ENCODE measurements at regions of chr14 and their contacts with region 1.

Region 1: DNA sequence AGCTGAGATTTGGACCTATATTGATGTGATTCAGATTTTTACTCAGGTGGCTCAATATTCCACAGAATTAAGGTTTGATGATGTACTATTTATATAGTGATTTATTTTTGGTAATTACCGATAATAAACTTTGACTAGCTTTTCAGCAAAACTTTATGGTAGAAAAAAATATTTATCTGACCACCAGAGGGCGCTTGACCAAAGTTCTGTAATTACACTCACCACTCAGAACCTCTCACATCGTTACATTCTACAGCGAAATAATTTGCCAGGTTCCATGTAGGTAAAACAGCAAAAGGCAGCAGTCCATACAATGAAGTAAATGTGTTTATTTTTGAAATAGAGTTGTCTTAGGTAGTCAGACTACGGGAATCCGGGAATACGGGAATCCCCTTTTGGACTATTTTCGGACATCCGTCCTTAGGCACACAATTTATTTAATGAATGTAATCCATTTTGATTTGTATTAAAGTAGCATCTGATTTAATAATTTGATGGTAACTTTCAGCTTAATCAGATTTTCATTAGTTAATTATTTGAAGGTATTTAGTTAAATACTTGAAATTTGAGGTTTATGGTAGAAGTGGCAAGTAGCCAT is 143.0 kb upstream of the DDHD1 start:
- DNase-seq: no peak
- H3K4me3 ChIP-seq: no peak overlapping the region
- H3K27ac ChIP-seq: no peak overlapping the region
- H3K4me1 ChIP-seq: no peaks in the 10 kb centered on the region
- H3K27me3 ChIP-seq: no peaks in the 10 kb centered on the region
- CTCF ChIP-seq: peak; percentile 16 to 66 (median 48)
- EP300 ChIP-seq: no peak
- POLR2A ChIP-seq: no peak

Region 2: GRCh38 chr14:53152890-53153701 is 143.0 kb before region 1 on chr14 and contains the start of gene DDHD1:
- intact Hi-C with region 1: loop called (anchors 5 kb)
- DNase-seq: peak; percentile 86
- H3K4me3 ChIP-seq: peak within 1 kb of the TSS; percentile 63 to 87 (median 76)
- H3K27ac ChIP-seq: peak within 1 kb of the TSS; percentile 84 to 97 (median 96)
- H3K4me1 ChIP-seq: peaks cover 0 to 24% (median 18%) of the 10 kb centered on the region in 4 donors
- H3K27me3 ChIP-seq: no peaks in the 10 kb centered on the region
- CTCF ChIP-seq: no peak
- EP300 ChIP-seq: no peak
- POLR2A ChIP-seq: no peak
- total RNA-seq, gene DDHD1: 15.2 to 21.4 (median 17.9) TPM

Region 3: DNA sequence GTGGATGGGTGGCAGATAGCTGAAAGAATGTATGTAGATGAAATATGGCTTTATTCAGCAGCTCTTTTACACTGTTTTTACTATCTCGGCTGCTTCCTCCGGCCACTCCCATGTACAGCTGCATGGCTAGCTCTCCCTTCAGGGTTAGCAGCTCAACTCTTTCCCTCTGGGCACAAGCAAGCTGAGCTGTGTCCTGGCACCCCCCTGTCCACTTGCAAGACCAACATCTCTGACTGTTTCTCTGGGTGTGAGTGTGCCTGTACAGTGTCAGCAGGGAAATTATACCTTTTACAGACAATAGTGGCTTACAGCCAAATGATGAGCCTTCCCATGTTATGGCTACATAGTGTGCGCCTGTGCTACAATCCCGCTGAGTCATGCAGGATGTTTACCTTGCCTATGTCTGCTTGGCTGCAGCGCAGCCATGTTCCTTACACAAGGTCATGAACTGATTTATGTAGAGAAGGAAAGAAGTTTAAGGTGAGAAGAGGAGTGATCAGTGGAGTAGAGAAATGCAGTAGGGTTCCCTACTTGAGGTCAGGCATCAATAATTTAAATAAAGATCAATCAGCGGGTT is 17.1 kb before region 1 on chr14:
- intact Hi-C with region 1: no loop called
- DNase-seq: no peak
- H3K4me3 ChIP-seq: no peak overlapping the region
- H3K27ac ChIP-seq: peak overlapping the region in 1 of 4 donors; percentile 18
- H3K4me1 ChIP-seq: peaks cover 0 to 10% (median 3%) of the 10 kb centered on the region in 4 donors
- H3K27me3 ChIP-seq: no peaks in the 10 kb centered on the region
- CTCF ChIP-seq: no peak
- EP300 ChIP-seq: no peak
- POLR2A ChIP-seq: no peak

Region 4: GRCh38 chr14:54347997-54348611 is 1052.0 kb after region 1 on chr14:
- intact Hi-C with region 1: loop called (anchors 5 kb)
- DNase-seq: no peak
- H3K4me3 ChIP-seq: no peak overlapping the region
- H3K27ac ChIP-seq: peak overlapping the region in 1 of 4 donors; percentile 56
- H3K4me1 ChIP-seq: no peaks in the 10 kb centered on the region
- H3K27me3 ChIP-seq: no peaks in the 10 kb centered on the region
- CTCF ChIP-seq: peak; percentile 12 to 61 (median 49)
- EP300 ChIP-seq: no peak
- POLR2A ChIP-seq: no peak